ENCODE measurements at regions of chr14 and their contacts with region 1.

Region 1: DNA sequence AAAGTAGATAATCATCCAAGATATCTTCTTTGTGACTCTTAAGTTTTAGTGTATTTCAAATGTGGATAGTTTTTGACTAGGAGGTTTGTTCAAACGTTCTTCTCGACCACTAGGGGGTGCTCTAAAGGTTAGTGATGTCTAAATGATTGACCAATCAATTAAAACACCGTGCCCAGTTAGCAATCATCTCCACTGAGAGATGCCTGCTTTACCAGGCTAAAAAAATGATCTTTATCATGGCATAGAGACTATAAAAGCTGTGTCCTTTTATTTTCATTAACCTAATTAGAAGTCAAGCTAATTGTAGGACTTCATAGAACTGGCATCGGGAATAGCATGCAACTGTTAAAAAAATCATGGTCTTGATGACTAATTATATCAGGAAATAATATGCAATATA is 153.9 kb downstream of the PRKCH start:
- DNase-seq: no peak
- ATAC-seq: peak; percentile 48
- H3K4me3 ChIP-seq: no peak overlapping the region
- H3K27ac ChIP-seq: no peak overlapping the region
- H3K4me1 ChIP-seq: peaks cover 67% of the 10 kb centered on the region
- H3K27me3 ChIP-seq: no peaks in the 10 kb centered on the region
- CTCF ChIP-seq: peak; percentile 54 to 59 (median 57); a peak in 5 of 6 replicates
- EP300 ChIP-seq: no peak
- POLR2A ChIP-seq: no peak
- RAD21 ChIP-seq: peak; percentile 55

Region 2: DNA sequence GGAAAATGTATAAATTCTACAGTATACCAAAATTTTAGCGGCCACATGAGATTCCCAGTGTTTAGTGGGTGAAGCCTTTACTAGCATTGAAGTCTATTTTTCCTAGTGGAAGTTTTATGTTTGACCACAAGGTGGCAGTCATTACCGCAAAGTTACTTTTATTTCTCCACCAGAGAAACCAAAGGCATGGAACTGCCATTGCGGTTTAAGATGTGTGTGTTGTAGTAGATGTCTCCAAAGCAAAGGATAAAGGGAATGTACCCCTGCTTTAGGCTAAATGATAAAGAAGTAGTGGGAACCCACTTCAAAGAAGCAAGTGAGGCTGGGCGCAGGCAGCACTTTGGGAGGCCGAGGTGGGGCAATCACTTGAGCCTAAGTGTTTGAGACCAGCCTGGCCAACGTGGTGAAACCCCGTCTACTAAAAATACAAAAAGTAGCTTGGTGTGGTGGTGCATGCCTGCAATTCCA is 13.5 kb before region 1 on chr14:
- CTCF ChIA-PET with region 1: interaction called, 31 read pairs
- POLR2A ChIA-PET with region 1: no interaction called
- RAD21 ChIA-PET with region 1: interaction called, 3 read pairs
- SMC1A ChIA-PET with region 1: interaction called, 10 read pairs
- in situ Hi-C with region 1: no loop called
- intact Hi-C with region 1: no loop called
- DNase-seq: no peak
- ATAC-seq: peak; percentile 70
- H3K4me3 ChIP-seq: no peak overlapping the region
- H3K27ac ChIP-seq: no peak overlapping the region
- H3K4me1 ChIP-seq: no peaks in the 10 kb centered on the region
- H3K27me3 ChIP-seq: no peaks in the 10 kb centered on the region
- CTCF ChIP-seq: peak; percentile 42 to 67 (median 57); a peak in 5 of 6 replicates
- EP300 ChIP-seq: no peak
- POLR2A ChIP-seq: no peak
- RAD21 ChIP-seq: peak; percentile 76

Region 3: GRCh38 chr14:61525293-61526011 is 50.1 kb after region 1 on chr14:
- CTCF ChIA-PET with region 1: interaction called, 15 read pairs
- POLR2A ChIA-PET with region 1: no interaction called
- RAD21 ChIA-PET with region 1: no interaction called
- SMC1A ChIA-PET with region 1: interaction called, 19 read pairs
- in situ Hi-C with region 1: no loop called
- intact Hi-C with region 1: no loop called
- DNase-seq: peak; percentile 85
- ATAC-seq: peak; percentile 88
- H3K4me3 ChIP-seq: peak overlapping the region; percentile 34; the same call in 1 of the 2 replicates
- H3K27ac ChIP-seq: peak overlapping the region; percentile 60
- H3K4me1 ChIP-seq: peaks cover 15% of the 10 kb centered on the region
- H3K27me3 ChIP-seq: no peaks in the 10 kb centered on the region
- CTCF ChIP-seq: no peak
- EP300 ChIP-seq: peak; percentile 35 to 56; a peak in 2 of 4 replicates
- POLR2A ChIP-seq: no peak
- RAD21 ChIP-seq: no peak

Region 4: GRCh38 chr14:61703342-61704129 is 228.2 kb after region 1 on chr14:
- CTCF ChIA-PET with region 1: interaction called, 12 read pairs
- POLR2A ChIA-PET with region 1: no interaction called
- RAD21 ChIA-PET with region 1: no interaction called
- SMC1A ChIA-PET with region 1: interaction called, 7 read pairs
- in situ Hi-C with region 1: no loop called
- intact Hi-C with region 1: no loop called
- DNase-seq: no peak
- ATAC-seq: peak; percentile 54
- H3K4me3 ChIP-seq: 0 out of 2 replicates have a peak overlapping the region, but pooled peaks have one; percentile 18
- H3K27ac ChIP-seq: no peak overlapping the region; the same call in 1 of the 2 replicates
- H3K4me1 ChIP-seq: peaks cover 9% of the 10 kb centered on the region; the same call in 1 of the 2 replicates
- H3K27me3 ChIP-seq: no peaks in the 10 kb centered on the region
- CTCF ChIP-seq: no peak
- EP300 ChIP-seq: no peak
- POLR2A ChIP-seq: no peak
- RAD21 ChIP-seq: no peak

Region 5: GRCh38 chr14:61737915-61738314 is 262.6 kb after region 1 on chr14:
- CTCF ChIA-PET with region 1: interaction called, 13 read pairs
- POLR2A ChIA-PET with region 1: interaction called, 8 read pairs
- RAD21 ChIA-PET with region 1: no interaction called
- SMC1A ChIA-PET with region 1: interaction called, 11 read pairs
- in situ Hi-C with region 1: no loop called
- intact Hi-C with region 1: loop called (anchors 5 kb)
- DNase-seq: no peak
- ATAC-seq: no peak
- H3K4me3 ChIP-seq: no peak overlapping the region
- H3K27ac ChIP-seq: no peak overlapping the region
- H3K4me1 ChIP-seq: no peaks in the 10 kb centered on the region
- H3K27me3 ChIP-seq: no peaks in the 10 kb centered on the region
- CTCF ChIP-seq: no peak
- EP300 ChIP-seq: no peak
- POLR2A ChIP-seq: no peak
- RAD21 ChIP-seq: no peak

Region 6: GRCh38 chr14:61761959-61762786 is 286.9 kb after region 1 on chr14 and contains the start of gene SNAPC1:
- CTCF ChIA-PET with region 1: interaction called, 10 read pairs
- POLR2A ChIA-PET with region 1: interaction called, 3 read pairs
- RAD21 ChIA-PET with region 1: no interaction called
- SMC1A ChIA-PET with region 1: interaction called, 11 read pairs
- in situ Hi-C with region 1: no loop called
- intact Hi-C with region 1: no loop called
- DNase-seq: peak; percentile 96
- ATAC-seq: peak; percentile 99
- H3K4me3 ChIP-seq: peak within 1 kb of the TSS; percentile 98
- H3K27ac ChIP-seq: peak within 1 kb of the TSS; percentile 87
- H3K4me1 ChIP-seq: no peaks in the 10 kb centered on the region; the same call in 1 of the 2 replicates
- H3K27me3 ChIP-seq: no peaks in the 10 kb centered on the region
- CTCF ChIP-seq: no peak
- EP300 ChIP-seq: no peak
- POLR2A ChIP-seq: peak; percentile 93
- RAD21 ChIP-seq: no peak
- polyA plus RNA-seq, gene SNAPC1: 5.2 to 7.0 TPM